Ovary (tissue), 10 donors: ENCODE measurements at regions of chr9 and their contacts with region 1.

Region 1: GRCh38 chr9:131755541-131756198 is 15.8 kb upstream of the RAPGEF1 start:
- DNase-seq: peak; percentile 34 to 80 (median 66)
- H3K4me3 ChIP-seq: no peak overlapping the region
- H3K27ac ChIP-seq: no peak overlapping the region
- H3K4me1 ChIP-seq: no peaks in the 10 kb centered on the region
- H3K27me3 ChIP-seq: no peaks in the 10 kb centered on the region
- CTCF ChIP-seq: peak; percentile 8 to 21 (median 21)
- EP300 ChIP-seq: no peak
- POLR2A ChIP-seq: no peak

Region 2: DNA sequence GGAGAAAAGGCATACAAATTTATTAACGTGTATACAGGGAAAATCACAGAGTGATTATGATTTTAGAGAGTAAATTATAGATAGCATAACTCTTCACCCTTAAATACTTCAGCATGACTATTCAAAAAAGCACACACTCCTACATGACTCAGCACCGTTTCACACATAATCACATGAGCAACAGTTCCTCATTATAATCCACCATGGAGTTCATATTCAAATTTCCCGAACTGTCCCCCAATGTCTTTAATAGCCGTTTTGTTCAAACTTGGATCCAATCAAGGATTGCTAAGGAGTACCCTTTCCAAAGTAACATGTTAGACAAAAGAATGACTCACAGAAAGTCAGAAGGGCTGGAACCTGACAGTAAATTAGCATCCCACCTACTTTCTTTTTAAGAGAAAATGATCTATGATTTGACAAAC is 47.9 kb before region 1 on chr9:
- intact Hi-C with region 1: no loop called
- DNase-seq: no peak
- H3K4me3 ChIP-seq: no peak overlapping the region
- H3K27ac ChIP-seq: no peak overlapping the region
- H3K4me1 ChIP-seq: no peaks in the 10 kb centered on the region
- H3K27me3 ChIP-seq: no peaks in the 10 kb centered on the region
- CTCF ChIP-seq: no peak
- EP300 ChIP-seq: no peak
- POLR2A ChIP-seq: no peak

Region 3: GRCh38 chr9:132268725-132269352 is 513.2 kb after region 1 on chr9:
- intact Hi-C with region 1: loop called in 1 of 4 experiments (anchors 2 kb)
- DNase-seq: peak; percentile 48 to 81 (median 70)
- H3K4me3 ChIP-seq: no peak overlapping the region
- H3K27ac ChIP-seq: no peak overlapping the region
- H3K4me1 ChIP-seq: no peaks in the 10 kb centered on the region
- H3K27me3 ChIP-seq: no peaks in the 10 kb centered on the region
- CTCF ChIP-seq: peak; percentile 63 to 75 (median 64)
- EP300 ChIP-seq: no peak
- POLR2A ChIP-seq: no peak